CD8-positive, alpha-beta memory T cell (primary cell): ENCODE measurements at regions of chr11 and their contacts with region 1.

Region 1: GRCh38 chr11:86230921-86231430 is 13.6 kb upstream of the EED start:
- DNase-seq: no peak
- H3K4me3 ChIP-seq: no peak overlapping the region
- H3K4me3 Mint-ChIP-seq: no peak overlapping the region
- H3K27ac ChIP-seq: no peak overlapping the region
- H3K27ac Mint-ChIP-seq: no peak overlapping the region
- H3K4me1 ChIP-seq: no peaks in the 10 kb centered on the region
- H3K4me1 Mint-ChIP-seq: no peaks in the 10 kb centered on the region
- H3K27me3 ChIP-seq: no peaks in the 10 kb centered on the region
- H3K27me3 Mint-ChIP-seq: peaks cover 5 to 9% of the 10 kb centered on the region in 2 donors

Region 2: DNA sequence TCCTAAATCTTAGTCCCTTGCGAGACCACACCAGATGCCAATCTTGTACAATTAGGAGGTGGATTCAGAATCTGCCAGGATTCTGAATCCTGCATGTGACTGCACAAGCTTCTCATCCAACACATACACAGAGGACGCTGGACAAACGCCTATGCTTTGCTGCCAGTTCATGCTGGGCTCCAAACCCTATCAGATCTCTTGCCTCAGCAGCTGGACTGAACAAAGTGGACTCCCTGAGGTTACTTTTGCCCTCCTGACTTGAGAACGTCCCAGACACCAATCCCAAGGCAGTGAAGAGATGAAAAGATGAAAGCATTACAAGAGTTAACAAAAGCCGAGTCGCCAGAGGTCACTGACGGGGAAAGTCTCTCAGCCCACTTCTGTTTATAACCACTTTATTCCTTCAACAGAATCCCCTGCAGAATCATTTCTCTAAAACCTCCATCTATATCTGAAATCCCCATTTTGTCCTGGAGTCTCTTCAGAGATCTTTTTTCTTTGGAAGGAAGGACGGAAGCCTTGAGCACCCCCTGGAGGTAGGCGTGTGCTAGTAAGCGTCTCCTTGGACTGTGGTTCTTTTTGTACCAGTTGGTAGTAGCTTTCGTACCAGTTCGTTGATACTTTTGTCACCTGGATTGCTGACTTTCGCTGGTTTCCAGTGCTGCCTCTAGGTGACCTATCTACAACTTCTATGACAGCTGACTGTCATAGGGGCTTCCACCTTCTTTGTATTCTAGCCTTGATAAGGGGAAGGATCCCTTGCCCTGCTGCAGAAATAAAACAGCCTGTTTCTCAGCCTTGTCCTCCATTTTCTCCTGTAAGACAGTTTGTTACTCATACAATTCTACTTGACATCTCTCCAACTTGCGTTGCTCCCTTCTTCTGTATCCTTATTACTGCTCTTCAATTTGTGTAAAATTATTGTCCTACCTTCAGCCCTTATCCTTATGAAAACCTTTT is 12.6 kb before region 1 on chr11:
- CTCF ChIA-PET with region 1: interaction called, 15 read pairs
- POLR2A ChIA-PET with region 1: no interaction called
- DNase-seq: peak; percentile 39 to 68 (median 46)
- H3K4me3 ChIP-seq: peak overlapping the region; percentile 43
- H3K4me3 Mint-ChIP-seq: peak overlapping the region; percentile 10 to 80 (median 76)
- H3K27ac ChIP-seq: no peak overlapping the region
- H3K27ac Mint-ChIP-seq: peak overlapping the region in 4 of 8 donors; percentile 1 to 38 (median 14)
- H3K4me1 ChIP-seq: peaks cover 9% of the 10 kb centered on the region
- H3K4me1 Mint-ChIP-seq: peaks cover 9 to 20% (median 11%) of the 10 kb centered on the region in 3 donors
- H3K27me3 ChIP-seq: no peaks in the 10 kb centered on the region
- H3K27me3 Mint-ChIP-seq: peaks cover 5 to 32% of the 10 kb centered on the region in 2 donors